PC-3 (cell line): ENCODE measurements at regions of chr1 and their contacts with region 1.

Region 1: DNA sequence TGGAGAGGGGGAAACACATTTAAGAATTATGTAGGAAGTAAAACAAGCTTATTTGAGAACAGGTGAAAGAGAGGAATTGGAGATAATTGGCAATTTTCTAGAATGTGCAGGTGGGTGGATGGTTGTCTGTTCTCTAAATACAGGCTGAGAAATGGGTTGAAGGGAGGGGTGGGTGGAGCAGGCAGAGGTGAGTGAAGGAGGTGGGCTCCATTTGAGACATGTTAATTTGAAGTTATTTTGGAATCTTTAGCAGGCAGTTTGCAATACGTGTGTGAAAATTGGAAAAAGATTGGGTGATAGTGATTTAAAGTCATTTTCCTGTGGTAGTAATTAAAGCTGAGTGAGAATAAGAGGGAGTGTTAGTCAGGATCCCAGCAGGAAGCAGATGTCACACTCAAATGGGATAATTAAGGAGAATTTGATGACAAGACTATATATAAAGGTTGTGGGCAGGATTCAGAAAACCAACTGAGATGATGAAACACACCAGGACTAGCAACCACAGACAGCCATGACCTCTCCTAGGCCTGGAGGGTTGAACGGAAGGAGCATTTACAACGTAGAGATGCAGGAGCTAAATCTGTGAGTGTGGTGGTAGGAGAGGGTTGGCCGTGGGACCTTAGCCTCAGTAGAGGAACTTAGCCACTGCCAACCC is 40.6 kb downstream of the CHRM3 start:
- DNase-seq: no peak
- ATAC-seq: no peak
- H3K4me3 ChIP-seq: no peak overlapping the region
- H3K27ac ChIP-seq: no peak overlapping the region
- H3K4me1 ChIP-seq: peaks cover 12% of the 10 kb centered on the region
- H3K27me3 ChIP-seq: no peaks in the 10 kb centered on the region
- CTCF ChIP-seq: no peak

Region 2: DNA sequence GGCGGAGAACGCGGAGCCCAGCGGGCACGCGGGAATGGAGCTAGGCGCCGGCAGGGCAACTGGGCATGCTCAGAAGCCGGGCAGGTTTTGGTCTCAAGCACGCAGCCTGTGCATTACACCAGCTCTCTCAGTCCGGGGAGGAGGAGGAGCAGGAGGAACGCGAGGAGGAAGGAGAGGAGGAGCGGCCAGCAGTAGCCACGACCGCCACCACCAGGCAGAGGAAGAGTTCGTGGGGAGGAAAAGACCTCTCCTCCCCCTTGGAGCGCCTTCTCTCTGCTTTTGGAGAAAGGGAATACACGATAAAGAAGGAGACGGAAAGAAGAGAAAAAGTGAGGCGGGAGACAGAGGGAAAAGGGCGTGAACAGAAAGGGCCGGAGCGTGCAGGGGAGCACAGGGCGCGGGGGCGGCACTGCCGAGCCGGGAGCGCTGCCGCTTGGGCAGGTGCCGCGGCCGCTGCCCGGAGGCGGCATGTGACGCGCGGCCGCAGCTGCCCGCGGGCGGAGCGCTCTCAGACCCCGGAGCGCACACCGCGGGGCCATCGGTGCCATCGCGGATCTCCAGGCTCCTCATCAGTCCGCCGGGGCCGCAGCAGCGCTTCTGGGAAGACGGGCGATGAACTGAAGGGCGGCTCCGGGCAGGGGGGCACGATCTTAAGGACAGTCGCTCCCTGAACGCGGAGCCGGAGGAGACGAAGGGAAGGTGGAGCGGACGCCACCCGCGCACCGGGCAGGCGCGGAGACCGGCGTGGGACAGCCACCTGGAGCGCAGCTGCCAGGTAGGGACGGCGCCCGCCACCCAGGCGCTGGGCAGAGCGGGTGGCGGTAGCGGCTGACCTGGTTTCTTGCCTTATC is 40.3 kb before region 1 on chr1 and contains the start of gene CHRM3:
- CTCF ChIA-PET with region 1: no interaction called
- POLR2A ChIA-PET with region 1: no interaction called
- intact Hi-C with region 1: no loop called
- DNase-seq: peak; percentile 90
- ATAC-seq: peak; percentile 82
- H3K4me3 ChIP-seq: peak within 1 kb of the TSS; percentile 76
- H3K27ac ChIP-seq: 0 out of 2 replicates have a peak within 1 kb of the TSS, but pooled peaks have one; percentile 9
- H3K4me1 ChIP-seq: peaks cover 15% of the 10 kb centered on the region; the same call in 1 of the 2 replicates
- H3K27me3 ChIP-seq: peaks cover 30% of the 10 kb centered on the region
- CTCF ChIP-seq: peak; percentile 60
- total RNA-seq, gene CHRM3: 1.2 and 3.5 TPM in 2 replicates

Region 3: GRCh38 chr1:239443361-239443760 is 16.4 kb after region 1 on chr1:
- CTCF ChIA-PET with region 1: no interaction called
- POLR2A ChIA-PET with region 1: no interaction called
- intact Hi-C with region 1: loop called (anchors 1 kb)
- DNase-seq: no peak
- ATAC-seq: no peak
- H3K4me3 ChIP-seq: no peak overlapping the region
- H3K27ac ChIP-seq: peak overlapping the region; percentile 27
- H3K4me1 ChIP-seq: peaks cover 27% of the 10 kb centered on the region
- H3K27me3 ChIP-seq: no peaks in the 10 kb centered on the region
- CTCF ChIP-seq: no peak